T-cell (primary cell): ENCODE measurements at regions of chr7 and their contacts with region 1.

Region 1: GRCh38 chr7:27208998-27209397 is 9.1 kb upstream of the HOXA13 start:
- DNase-seq: no peak
- ATAC-seq: no peak
- H3K4me3 ChIP-seq: no peak overlapping the region
- H3K4me3 Mint-ChIP-seq: no peak overlapping the region
- H3K27ac ChIP-seq: no peak overlapping the region
- H3K27ac Mint-ChIP-seq: no peak overlapping the region
- H3K4me1 ChIP-seq: peaks cover 2 to 33% of the 10 kb centered on the region in 2 experiments
- H3K4me1 Mint-ChIP-seq: peaks cover 27 to 33% (median 27%) of the 10 kb centered on the region in 3 donors
- H3K27me3 ChIP-seq: peaks cover 33 to 81% of the 10 kb centered on the region in 2 experiments
- H3K27me3 Mint-ChIP-seq: peaks cover 87 to 92% of the 10 kb centered on the region in 2 donors

Region 2: DNA sequence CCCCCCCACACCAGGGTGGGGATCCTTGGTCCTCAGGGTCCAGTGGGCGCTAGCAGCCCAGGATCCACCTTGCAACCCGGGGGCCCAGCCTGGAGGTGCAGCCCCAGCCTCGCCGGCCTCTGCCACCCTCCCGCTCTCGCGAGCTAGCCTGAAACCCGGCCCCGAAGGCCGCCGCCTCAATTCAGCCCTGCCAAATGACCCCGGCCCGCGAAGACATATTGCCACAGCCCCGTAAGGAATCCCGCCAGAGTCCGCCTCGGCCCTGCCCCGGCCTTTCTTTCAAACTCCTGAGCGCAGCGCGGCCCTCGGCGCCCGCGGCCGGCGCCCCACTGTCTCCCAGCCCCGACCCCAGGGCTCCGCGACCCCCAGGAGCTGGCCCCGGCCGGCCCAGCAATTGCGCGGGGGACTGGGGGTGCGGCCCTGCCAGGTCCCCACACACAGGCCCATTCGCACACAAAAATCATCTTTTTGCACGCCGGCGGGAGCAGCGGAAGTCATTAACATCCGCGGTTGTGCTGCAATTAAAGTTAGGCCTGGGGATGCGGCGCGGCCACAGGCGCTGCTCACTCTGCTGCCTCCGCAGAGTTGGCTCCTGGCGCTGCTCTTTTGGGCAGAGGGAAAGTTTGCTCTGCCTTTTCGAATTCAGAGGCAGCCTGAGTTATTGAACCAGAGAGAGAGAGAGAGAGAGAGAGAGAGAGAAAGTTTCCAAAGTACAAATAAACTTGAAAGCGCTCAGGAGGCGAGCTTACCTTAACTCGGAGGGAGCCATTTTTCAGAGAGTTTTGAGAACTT is 69.5 kb before region 1 on chr7:
- CTCF ChIA-PET with region 1: no interaction called
- POLR2A ChIA-PET with region 1: no interaction called
- DNase-seq: no peak
- ATAC-seq: no peak
- H3K4me3 ChIP-seq: no peak overlapping the region
- H3K4me3 Mint-ChIP-seq: no peak overlapping the region
- H3K27ac ChIP-seq: no peak overlapping the region
- H3K27ac Mint-ChIP-seq: no peak overlapping the region
- H3K4me1 ChIP-seq: peaks cover 0 to 16% of the 10 kb centered on the region in 2 experiments
- H3K4me1 Mint-ChIP-seq: peaks cover 0 to 15% (median 3%) of the 10 kb centered on the region in 3 donors
- H3K27me3 ChIP-seq: peaks cover 0 to 46% of the 10 kb centered on the region in 2 experiments
- H3K27me3 Mint-ChIP-seq: peaks cover 41 to 66% of the 10 kb centered on the region in 2 donors

Region 3: GRCh38 chr7:27168265-27168947 is 40.6 kb before region 1 on chr7:
- CTCF ChIA-PET with region 1: no interaction called
- POLR2A ChIA-PET with region 1: no interaction called
- DNase-seq: peak in 4 of 35 experiments; percentile 22 to 60 (median 28)
- ATAC-seq: peak in 1 of 4 experiments; percentile 44
- H3K4me3 ChIP-seq: no peak overlapping the region
- H3K4me3 Mint-ChIP-seq: peak overlapping the region in 1 of 3 donors; percentile 74
- H3K27ac ChIP-seq: no peak overlapping the region
- H3K27ac Mint-ChIP-seq: peak overlapping the region in 1 of 2 donors; percentile 73
- H3K4me1 ChIP-seq: peaks cover 10 to 78% of the 10 kb centered on the region in 2 experiments
- H3K4me1 Mint-ChIP-seq: peaks cover 36 to 44% (median 42%) of the 10 kb centered on the region in 3 donors
- H3K27me3 ChIP-seq: peaks cover 17 to 92% of the 10 kb centered on the region in 2 experiments
- H3K27me3 Mint-ChIP-seq: peaks cover 62 to 80% of the 10 kb centered on the region in 2 donors

Region 4: DNA sequence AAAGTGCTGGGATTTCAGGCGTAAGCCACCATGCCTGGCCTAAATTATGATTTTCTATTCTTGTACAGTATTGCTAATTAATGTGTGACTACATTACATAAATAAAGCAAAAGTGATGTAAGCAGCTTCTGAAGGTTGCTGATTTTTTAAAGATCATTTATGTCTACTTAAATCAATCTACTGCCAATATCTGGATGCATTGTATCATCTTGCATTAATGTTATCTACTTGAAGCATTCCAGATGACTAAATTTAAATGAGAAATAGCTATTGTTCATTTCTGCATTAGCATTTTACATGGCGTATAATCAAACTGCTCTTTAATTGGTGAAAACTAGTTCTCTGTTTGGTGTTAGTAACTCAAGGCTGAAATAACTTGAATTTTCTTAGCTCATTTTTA is 490.8 kb after region 1 on chr7:
- CTCF ChIA-PET with region 1: no interaction called
- POLR2A ChIA-PET with region 1: interaction called in 1 of 2 experiments, 15 read pairs
- DNase-seq: no peak
- ATAC-seq: no peak
- H3K4me3 ChIP-seq: no peak overlapping the region
- H3K4me3 Mint-ChIP-seq: no peak overlapping the region
- H3K27ac ChIP-seq: no peak overlapping the region
- H3K27ac Mint-ChIP-seq: no peak overlapping the region
- H3K4me1 ChIP-seq: no peaks in the 10 kb centered on the region
- H3K4me1 Mint-ChIP-seq: no peaks in the 10 kb centered on the region
- H3K27me3 ChIP-seq: no peaks in the 10 kb centered on the region
- H3K27me3 Mint-ChIP-seq: peaks cover 14 to 16% of the 10 kb centered on the region in 2 donors